ENCODE measurements at regions of chr7 and their contacts with region 1.

Region 1: DNA sequence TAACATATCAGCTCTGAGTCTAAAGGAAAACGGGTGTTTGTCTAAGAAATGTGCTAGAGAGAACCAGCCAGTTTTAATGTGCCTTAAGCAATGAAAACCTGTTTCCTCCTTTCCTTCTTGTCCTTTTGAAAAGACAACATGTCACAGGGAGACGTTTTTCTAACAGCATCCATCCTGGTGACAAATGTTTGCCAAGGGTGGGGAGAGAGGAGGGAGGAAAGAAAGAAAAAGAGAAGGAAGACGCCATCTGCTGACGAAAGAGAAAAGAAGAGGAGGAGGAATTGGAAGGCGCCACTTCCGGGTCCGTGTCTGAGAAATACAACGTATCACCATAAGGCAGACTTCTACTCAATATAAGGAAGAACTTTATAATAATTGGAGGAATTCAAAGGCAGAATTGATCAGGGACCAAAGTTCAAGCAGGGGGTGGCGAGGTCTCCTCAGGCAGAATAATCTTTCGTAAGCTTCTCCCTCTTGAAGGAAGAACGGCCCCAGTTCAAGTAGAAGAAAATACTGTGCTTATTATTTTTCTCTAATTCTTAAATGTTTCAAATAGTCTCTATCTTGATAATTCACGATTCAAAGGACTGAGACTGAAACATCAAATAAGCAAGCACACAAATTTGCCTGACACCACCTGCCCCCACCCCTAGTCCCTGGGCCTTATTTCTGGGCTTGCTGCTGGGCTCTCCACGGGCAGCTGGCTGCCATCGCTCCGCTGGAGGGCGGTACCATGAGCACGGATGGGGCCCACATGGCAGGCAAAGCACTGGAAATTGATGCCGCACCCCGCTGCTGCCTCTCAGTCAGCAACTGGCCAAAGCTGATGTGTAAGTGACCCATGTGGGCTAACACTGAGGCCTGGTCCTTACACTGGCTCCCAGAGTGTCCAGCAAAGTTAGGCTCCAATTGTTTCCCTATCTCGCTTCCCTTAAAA is 273.7 kb upstream of the KLF14 start:
- DNase-seq: peak in 7 of 9 experiments; percentile 30 to 83 (median 51)
- ATAC-seq: peak; percentile 39
- H3K4me3 ChIP-seq: no peak overlapping the region
- H3K4me3 Mint-ChIP-seq: peak overlapping the region; percentile 53
- H3K27ac ChIP-seq: peak overlapping the region; percentile 3 to 73
- H3K27ac Mint-ChIP-seq: peak overlapping the region; percentile 60
- H3K4me1 ChIP-seq: peaks cover 62% of the 10 kb centered on the region
- H3K4me1 Mint-ChIP-seq: peaks cover 85% of the 10 kb centered on the region
- H3K27me3 ChIP-seq: no peaks in the 10 kb centered on the region
- H3K27me3 Mint-ChIP-seq: no peaks in the 10 kb centered on the region
- CTCF ChIP-seq: peak; percentile 50

Region 2: GRCh38 chr7:130369110-130369711 is 638.5 kb before region 1 on chr7:
- CTCF ChIA-PET with region 1: no interaction called
- POLR2A ChIA-PET with region 1: no interaction called
- intact Hi-C with region 1: no loop called
- DNase-seq: peak in 2 of 9 experiments; percentile 9 to 40
- ATAC-seq: no peak
- H3K4me3 ChIP-seq: peak overlapping the region; percentile 2 to 15
- H3K4me3 Mint-ChIP-seq: no peak overlapping the region
- H3K27ac ChIP-seq: peak overlapping the region in 1 of 2 experiments; percentile 57
- H3K27ac Mint-ChIP-seq: peak overlapping the region; percentile 41
- H3K4me1 ChIP-seq: peaks cover 46% of the 10 kb centered on the region
- H3K4me1 Mint-ChIP-seq: peaks cover 30% of the 10 kb centered on the region
- H3K27me3 ChIP-seq: no peaks in the 10 kb centered on the region
- H3K27me3 Mint-ChIP-seq: no peaks in the 10 kb centered on the region
- CTCF ChIP-seq: no peak

Region 3: GRCh38 chr7:130379921-130380860 is 627.5 kb before region 1 on chr7 and contains the start of gene CPA1:
- CTCF ChIA-PET with region 1: no interaction called
- POLR2A ChIA-PET with region 1: no interaction called
- intact Hi-C with region 1: no loop called
- DNase-seq: no peak
- ATAC-seq: no peak
- H3K4me3 ChIP-seq: no peak within 1 kb of the TSS
- H3K4me3 Mint-ChIP-seq: no peak within 1 kb of the TSS
- H3K27ac ChIP-seq: no peak within 1 kb of the TSS
- H3K27ac Mint-ChIP-seq: no peak within 1 kb of the TSS
- H3K4me1 ChIP-seq: no peaks in the 10 kb centered on the region
- H3K4me1 Mint-ChIP-seq: no peaks in the 10 kb centered on the region
- H3K27me3 ChIP-seq: no peaks in the 10 kb centered on the region
- H3K27me3 Mint-ChIP-seq: no peaks in the 10 kb centered on the region
- CTCF ChIP-seq: no peak
- total RNA-seq, gene CPA1: not detected

Region 4: GRCh38 chr7:130970696-130971095 is 37.0 kb before region 1 on chr7:
- CTCF ChIA-PET with region 1: no interaction called
- POLR2A ChIA-PET with region 1: no interaction called
- intact Hi-C with region 1: loop called in 1 of 2 experiments (anchors 5 kb)
- DNase-seq: peak in 1 of 9 experiments; percentile 27
- ATAC-seq: no peak
- H3K4me3 ChIP-seq: no peak overlapping the region
- H3K4me3 Mint-ChIP-seq: no peak overlapping the region
- H3K27ac ChIP-seq: peak overlapping the region in 1 of 2 experiments; percentile 17
- H3K27ac Mint-ChIP-seq: no peak overlapping the region
- H3K4me1 ChIP-seq: peaks cover 12% of the 10 kb centered on the region
- H3K4me1 Mint-ChIP-seq: peaks cover 70% of the 10 kb centered on the region
- H3K27me3 ChIP-seq: no peaks in the 10 kb centered on the region
- H3K27me3 Mint-ChIP-seq: no peaks in the 10 kb centered on the region
- CTCF ChIP-seq: no peak

Measured in CD8-positive, alpha-beta T cell (primary cell).